Activated CD8-positive, alpha-beta T cell treated with anti-CD3 and anti-CD28 coated beads, Interleukin-2, amount 10 ng/mL, durations not matched to agents 7 days and 5 days (primary cell): ENCODE measurements at regions of chr3 and their contacts with region 1.

Region 1: GRCh38 chr3:141050576-141051442 is at the start of gene SPSB4:
- DNase-seq: peak; percentile 47
- ATAC-seq: peak; percentile 70
- H3K4me3 Mint-ChIP-seq: peak within 1 kb of the TSS; percentile 67
- H3K27ac Mint-ChIP-seq: no peak within 1 kb of the TSS
- H3K4me1 Mint-ChIP-seq: peaks cover 18% of the 10 kb centered on the region
- H3K27me3 Mint-ChIP-seq: peaks cover 65% of the 10 kb centered on the region
- total RNA-seq, gene SPSB4: not detected

Region 2: GRCh38 chr3:141039589-141039988 is 11.2 kb before region 1 on chr3:
- CTCF ChIA-PET with region 1: interaction called, 11 read pairs
- POLR2A ChIA-PET with region 1: no interaction called
- DNase-seq: no peak
- ATAC-seq: no peak
- H3K4me3 Mint-ChIP-seq: no peak overlapping the region
- H3K27ac Mint-ChIP-seq: no peak overlapping the region
- H3K4me1 Mint-ChIP-seq: no peaks in the 10 kb centered on the region
- H3K27me3 Mint-ChIP-seq: peaks cover 24% of the 10 kb centered on the region